ENCODE measurements at regions of chr3 and their contacts with region 1.

Region 1: GRCh38 chr3:58526515-58526957 is 10.5 kb downstream of the ACOX2 start:
- DNase-seq: peak; percentile 88
- ATAC-seq: peak; percentile 87
- H3K4me3 ChIP-seq: peak overlapping the region; percentile 38 to 50
- H3K27ac ChIP-seq: peak overlapping the region; percentile 40
- H3K4me1 ChIP-seq: peaks cover 9 to 15% of the 10 kb centered on the region in 2 experiments
- H3K27me3 ChIP-seq: no peaks in the 10 kb centered on the region
- CTCF ChIP-seq: no peak
- POLR2A ChIP-seq: peak; percentile 53
- RAD21 ChIP-seq: no peak

Region 2: DNA sequence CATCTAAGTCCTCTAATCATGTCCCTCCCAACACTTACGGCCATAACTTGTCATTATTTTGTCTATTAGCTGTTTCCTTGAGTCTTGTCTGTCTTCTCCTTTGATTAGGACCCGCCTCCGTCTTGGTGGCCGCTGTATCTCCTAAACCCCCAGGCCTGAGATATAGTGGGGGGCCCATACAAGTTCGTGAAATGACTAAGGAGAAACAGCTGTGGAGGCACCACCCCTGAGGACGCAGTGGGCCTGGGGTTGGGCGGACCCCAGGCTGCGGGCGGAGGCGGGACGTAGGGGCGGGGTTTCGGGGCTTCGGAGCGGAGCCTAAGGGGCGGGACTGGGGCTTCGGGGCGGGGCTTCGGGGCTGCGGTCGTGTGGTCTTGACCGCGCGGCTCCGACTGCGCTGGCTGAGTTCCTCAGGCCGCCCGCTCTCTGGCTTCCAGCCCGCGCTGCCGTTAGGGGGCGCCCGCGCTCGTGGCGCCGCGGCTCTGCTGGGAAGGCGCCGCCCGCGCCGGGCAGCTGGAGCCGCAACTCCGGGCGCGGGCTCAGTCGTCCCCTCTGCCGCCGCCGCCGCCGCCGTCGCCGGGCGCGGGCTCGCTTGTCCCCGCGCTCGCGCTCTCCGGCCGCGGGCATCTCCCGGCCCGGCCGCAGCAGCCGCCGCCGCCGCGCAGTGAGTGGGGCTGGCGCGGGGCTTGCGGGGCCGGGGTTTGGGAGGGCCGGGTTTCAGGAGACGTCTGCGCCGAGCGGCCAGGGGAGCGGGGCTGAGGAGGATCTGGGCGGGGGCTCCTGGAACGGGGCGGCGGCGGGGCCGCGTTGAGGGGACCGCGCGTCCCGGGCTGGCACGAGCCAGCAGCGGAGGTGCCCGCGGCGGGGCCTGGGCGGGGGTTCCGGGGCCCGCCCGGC is 34.8 kb before region 1 on chr3 and contains the start of gene KCTD6:
- CTCF ChIA-PET with region 1: interaction called, 12 read pairs
- POLR2A ChIA-PET with region 1: interaction called, 3 read pairs
- RAD21 ChIA-PET with region 1: interaction called, 3 read pairs
- intact Hi-C with region 1: loop called (anchors 1 kb)
- DNase-seq: peak; percentile 85
- ATAC-seq: peak; percentile 94
- H3K4me3 ChIP-seq: peak within 1 kb of the TSS; percentile 77 to 85
- H3K27ac ChIP-seq: peak within 1 kb of the TSS; percentile 65
- H3K4me1 ChIP-seq: peaks cover 19 to 38% of the 10 kb centered on the region in 2 experiments
- H3K27me3 ChIP-seq: no peaks in the 10 kb centered on the region
- CTCF ChIP-seq: peak; percentile 47 to 68 (median 66); a peak in 5 of 6 replicates
- POLR2A ChIP-seq: peak; percentile 37
- RAD21 ChIP-seq: peak; percentile 69
- total RNA-seq, gene KCTD6: 12.0 TPM